WTC11 (cell line): ENCODE measurements at regions of chr19 and their contacts with region 1.

Region 1: GRCh38 chr19:38402967-38403861 is at the start of gene FAM98C:
- DNase-seq: peak; percentile 97
- ATAC-seq: peak; percentile 94
- H3K4me3 Mint-ChIP-seq: peak within 1 kb of the TSS; percentile 77
- H3K27ac Mint-ChIP-seq: no peak within 1 kb of the TSS
- H3K4me1 Mint-ChIP-seq: no peaks in the 10 kb centered on the region
- H3K27me3 Mint-ChIP-seq: peaks cover 57% of the 10 kb centered on the region
- CTCF ChIP-seq: peak; percentile 98
- total RNA-seq, gene FAM98C: 9.7 to 12.2 TPM (median 10.2 TPM) in 3 replicates

Region 2: GRCh38 chr19:38245826-38246498 is 157.3 kb before region 1 on chr19:
- CTCF ChIA-PET with region 1: interaction called, 20 read pairs
- POLR2A ChIA-PET with region 1: no interaction called
- DNase-seq: no peak
- ATAC-seq: no peak
- H3K4me3 Mint-ChIP-seq: no peak overlapping the region
- H3K27ac Mint-ChIP-seq: 0 out of 2 replicates have a peak overlapping the region, but pooled peaks have one; percentile 3
- H3K4me1 Mint-ChIP-seq: peaks cover 17% of the 10 kb centered on the region
- H3K27me3 Mint-ChIP-seq: peaks cover 2% of the 10 kb centered on the region; the same call in 1 of the 2 replicates
- CTCF ChIP-seq: no peak

Region 3: DNA sequence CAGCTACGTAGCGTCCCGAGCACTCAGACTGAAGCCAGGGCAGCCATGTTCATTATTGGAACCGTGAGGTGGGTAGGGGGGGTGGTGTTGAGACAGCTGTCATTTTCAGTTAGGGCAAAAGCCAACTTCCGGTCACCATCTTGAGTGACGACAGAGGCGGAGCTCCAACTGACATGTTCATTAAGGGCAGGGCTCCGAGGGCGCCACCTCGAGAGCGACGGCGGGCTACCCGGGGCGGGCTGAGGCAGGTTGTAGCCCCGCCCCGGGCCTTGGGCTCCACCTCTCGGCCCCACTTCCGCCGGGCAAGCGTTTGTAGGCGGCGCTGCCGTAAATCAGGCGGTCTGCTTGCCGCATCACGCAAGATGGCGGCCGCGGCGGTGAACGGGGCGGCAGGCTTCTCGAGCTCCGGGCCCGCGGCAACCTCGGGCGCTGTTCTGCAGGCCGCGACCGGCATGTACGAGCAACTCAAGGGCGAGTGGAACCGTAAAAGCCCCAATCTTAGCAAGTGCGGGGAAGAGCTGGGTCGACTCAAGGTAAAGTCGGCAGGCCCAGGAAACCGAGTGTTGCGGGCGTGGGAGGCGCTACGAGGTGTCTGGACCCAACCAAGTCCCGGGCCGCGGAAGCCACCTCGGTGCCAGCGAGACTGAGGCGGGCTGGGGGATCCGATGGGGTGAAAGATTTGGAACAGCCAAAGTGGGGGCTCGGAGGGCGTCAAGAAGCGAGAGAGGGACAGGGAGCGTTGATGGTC is 28.6 kb before region 1 on chr19 and contains the start of gene PSMD8:
- CTCF ChIA-PET with region 1: interaction called, 33 read pairs
- POLR2A ChIA-PET with region 1: interaction called, 6 read pairs
- DNase-seq: peak; percentile 99
- ATAC-seq: peak; percentile 99
- H3K4me3 Mint-ChIP-seq: peak within 1 kb of the TSS; percentile 100
- H3K27ac Mint-ChIP-seq: peak within 1 kb of the TSS; percentile 75
- H3K4me1 Mint-ChIP-seq: peaks cover 14% of the 10 kb centered on the region
- H3K27me3 Mint-ChIP-seq: peaks cover 25% of the 10 kb centered on the region
- CTCF ChIP-seq: no peak
- total RNA-seq, gene PSMD8: 156 to 167 TPM (median 160 TPM) in 3 replicates

Region 4: DNA sequence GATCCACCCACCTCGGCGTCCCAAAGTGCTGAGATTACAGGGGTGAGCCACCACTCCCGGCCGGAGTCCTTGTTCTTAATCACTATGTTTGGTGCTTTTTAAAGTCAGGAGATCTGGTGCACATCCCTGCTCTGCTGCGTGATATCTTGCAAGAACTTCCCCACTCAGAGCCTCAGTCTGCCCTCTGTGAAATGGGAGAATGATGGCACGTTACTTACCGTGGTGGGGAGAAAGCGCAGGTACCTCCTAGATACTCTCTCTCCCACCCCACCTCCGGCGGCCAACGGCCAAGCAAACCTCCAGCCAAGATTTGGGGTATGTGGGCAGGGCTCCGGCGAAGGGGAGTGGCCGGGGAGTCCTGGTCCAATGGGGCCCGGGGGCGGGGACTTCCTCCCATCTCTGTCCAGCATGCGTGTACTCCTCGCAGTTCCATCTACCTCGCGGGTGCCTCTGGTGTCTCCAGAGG is 30.1 kb after region 1 on chr19 and contains the start of gene RYR1:
- CTCF ChIA-PET with region 1: interaction called, 42 read pairs
- POLR2A ChIA-PET with region 1: interaction called, 14 read pairs
- DNase-seq: peak; percentile 97
- ATAC-seq: peak; percentile 89
- H3K4me3 Mint-ChIP-seq: peak within 1 kb of the TSS; percentile 84
- H3K27ac Mint-ChIP-seq: peak within 1 kb of the TSS; percentile 90
- H3K4me1 Mint-ChIP-seq: peaks cover 32% of the 10 kb centered on the region
- H3K27me3 Mint-ChIP-seq: peaks cover 2% of the 10 kb centered on the region; the same call in 1 of the 2 replicates
- CTCF ChIP-seq: no peak
- total RNA-seq, gene RYR1: 19.8 to 24.2 TPM (median 21.1 TPM) in 3 replicates

Region 5: GRCh38 chr19:38478273-38478967 is 75.2 kb after region 1 on chr19:
- CTCF ChIA-PET with region 1: interaction called, 38 read pairs
- POLR2A ChIA-PET with region 1: no interaction called
- DNase-seq: peak; percentile 39
- ATAC-seq: peak; percentile 81
- H3K4me3 Mint-ChIP-seq: no peak overlapping the region
- H3K27ac Mint-ChIP-seq: peak overlapping the region; percentile 48; the same call in 1 of the 2 replicates
- H3K4me1 Mint-ChIP-seq: no peaks in the 10 kb centered on the region
- H3K27me3 Mint-ChIP-seq: no peaks in the 10 kb centered on the region
- CTCF ChIP-seq: 0 out of 2 replicates have a peak, but pooled peaks have one; percentile 25

Region 6: DNA sequence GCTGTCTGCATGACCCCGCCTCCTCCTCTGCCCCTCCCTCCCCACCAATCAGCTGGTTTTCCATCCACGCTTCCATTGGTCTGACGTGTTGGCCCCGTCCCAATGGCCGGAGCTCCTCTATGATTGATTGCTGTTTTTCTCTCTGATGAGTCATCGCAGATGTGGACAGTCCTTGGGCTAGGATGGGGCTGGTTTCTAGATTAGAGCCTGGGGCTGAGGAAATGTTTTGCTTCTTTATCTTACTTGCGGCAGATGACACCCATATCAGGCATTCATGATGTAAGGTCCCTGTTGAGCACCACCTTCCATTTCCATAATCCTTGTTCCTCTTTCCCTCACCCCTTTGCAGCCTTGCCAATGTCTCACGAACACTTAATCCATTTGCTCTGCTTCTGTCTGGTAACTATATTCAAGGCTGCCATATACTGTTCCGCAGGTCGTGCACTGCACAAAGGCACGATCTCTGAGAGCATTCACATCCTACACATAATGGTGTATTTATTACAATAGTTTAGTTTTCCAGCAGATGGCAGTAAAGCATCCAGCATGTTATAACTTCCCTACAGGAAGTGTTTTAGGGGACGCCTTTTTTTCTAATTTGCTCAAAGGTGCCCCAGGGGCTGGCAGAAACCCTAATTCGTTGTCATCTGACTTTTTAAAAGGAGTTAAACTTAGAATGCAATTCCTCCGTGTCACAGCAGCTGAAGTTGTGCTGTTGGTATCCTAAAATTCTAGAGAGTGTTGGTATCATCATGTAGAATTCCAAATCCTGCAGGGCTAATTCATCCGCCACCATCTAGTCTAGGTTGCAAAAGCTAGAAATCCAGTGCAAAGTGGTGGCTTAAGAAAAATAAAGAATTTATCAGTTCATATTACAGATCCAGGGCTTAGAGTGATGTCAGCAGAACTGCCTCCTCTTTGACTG is 141.1 kb after region 1 on chr19:
- CTCF ChIA-PET with region 1: interaction called, 13 read pairs
- POLR2A ChIA-PET with region 1: no interaction called
- DNase-seq: peak; percentile 58
- ATAC-seq: peak; percentile 77
- H3K4me3 Mint-ChIP-seq: no peak overlapping the region
- H3K27ac Mint-ChIP-seq: peak overlapping the region; percentile 74
- H3K4me1 Mint-ChIP-seq: peaks cover 9% of the 10 kb centered on the region
- H3K27me3 Mint-ChIP-seq: no peaks in the 10 kb centered on the region
- CTCF ChIP-seq: 0 out of 2 replicates have a peak, but pooled peaks have one; percentile 19

Region 7: DNA sequence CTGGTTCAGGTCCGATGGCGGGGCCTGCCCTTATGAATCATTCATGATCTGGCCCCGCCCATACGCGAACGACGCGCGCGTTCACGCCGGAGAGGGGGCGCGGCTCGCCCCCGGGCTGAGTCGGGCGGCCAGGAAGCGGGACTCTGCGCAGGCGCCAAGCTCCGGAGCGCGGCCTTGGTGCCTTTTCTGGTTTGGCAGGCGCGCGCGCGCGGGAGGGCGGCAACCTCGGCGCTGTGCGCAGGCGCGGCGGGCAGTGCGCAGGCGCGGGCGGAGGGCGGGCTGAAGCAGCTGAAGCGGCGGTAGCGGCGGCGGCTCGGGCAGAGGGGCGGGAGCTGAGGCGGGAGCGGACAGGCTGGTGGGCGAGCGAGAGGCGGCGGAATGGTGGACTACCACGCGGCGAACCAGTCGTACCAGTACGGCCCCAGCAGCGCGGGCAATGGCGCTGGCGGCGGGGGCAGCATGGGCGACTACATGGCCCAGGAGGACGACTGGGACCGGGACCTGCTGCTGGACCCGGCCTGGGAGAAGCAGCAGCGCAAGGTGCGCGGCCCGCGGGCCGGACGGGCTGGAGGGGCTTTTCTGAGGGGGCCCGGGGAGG is 244.3 kb after region 1 on chr19 and contains the start of gene ACTN4:
- CTCF ChIA-PET with region 1: interaction called, 13 read pairs
- POLR2A ChIA-PET with region 1: interaction called, 3 read pairs
- DNase-seq: peak; percentile 100
- ATAC-seq: peak; percentile 83
- H3K4me3 Mint-ChIP-seq: peak within 1 kb of the TSS; percentile 94
- H3K27ac Mint-ChIP-seq: peak within 1 kb of the TSS; percentile 93
- H3K4me1 Mint-ChIP-seq: peaks cover 52% of the 10 kb centered on the region
- H3K27me3 Mint-ChIP-seq: no peaks in the 10 kb centered on the region
- CTCF ChIP-seq: no peak
- total RNA-seq, gene ACTN4: 484 to 511 TPM (median 506 TPM) in 3 replicates